Activated T-helper 1 cell treated with anti-CD3 and anti-CD28 coated beads, Interleukin-12 subunit alpha, Interleukin-12 subunit beta, Interleukin-2, Interleukin-4 antibody, amounts not matched to agents 30 ng/mL and 10 ng/mL and 1 ng/mL, durations not matched to agents 14 hours and 24 hours and 36 hours (primary cell): ENCODE measurements at regions of chr2 and their contacts with region 1.

Region 1: GRCh38 chr2:64165706-64166105 is 21.5 kb upstream of the PELI1 start:
- DNase-seq: no peak
- H3K4me3 Mint-ChIP-seq: no peak overlapping the region
- H3K27ac Mint-ChIP-seq: no peak overlapping the region
- H3K4me1 Mint-ChIP-seq: no peaks in the 10 kb centered on the region
- H3K27me3 Mint-ChIP-seq: no peaks in the 10 kb centered on the region

Region 2: GRCh38 chr2:64144057-64145013 is 21.4 kb before region 1 on chr2 and contains the start of gene PELI1:
- intact Hi-C with region 1: loop called (anchors 1 kb)
- DNase-seq: peak; percentile 90
- H3K4me3 Mint-ChIP-seq: peak within 1 kb of the TSS; percentile 98
- H3K27ac Mint-ChIP-seq: peak within 1 kb of the TSS; percentile 97
- H3K4me1 Mint-ChIP-seq: peaks cover 28% of the 10 kb centered on the region
- H3K27me3 Mint-ChIP-seq: peaks cover 3% of the 10 kb centered on the region
- total RNA-seq, gene PELI1: 47.1 and 50.4 TPM in 2 replicates